Ovary (tissue), 10 donors: ENCODE measurements at regions of chr5 and their contacts with region 1.

Region 1: GRCh38 chr5:134041570-134042411 is 37.0 kb upstream of the VDAC1 start:
- DNase-seq: no peak
- H3K4me3 ChIP-seq: no peak overlapping the region
- H3K27ac ChIP-seq: no peak overlapping the region
- H3K4me1 ChIP-seq: no peaks in the 10 kb centered on the region
- H3K27me3 ChIP-seq: no peaks in the 10 kb centered on the region
- CTCF ChIP-seq: no peak
- EP300 ChIP-seq: no peak
- POLR2A ChIP-seq: no peak

Region 2: GRCh38 chr5:133111299-133111698 is 930.5 kb before region 1 on chr5:
- intact Hi-C with region 1: loop called in 1 of 4 experiments (anchors 5 kb)
- DNase-seq: peak; percentile 50 to 86 (median 73)
- H3K4me3 ChIP-seq: no peak overlapping the region
- H3K27ac ChIP-seq: no peak overlapping the region
- H3K4me1 ChIP-seq: no peaks in the 10 kb centered on the region
- H3K27me3 ChIP-seq: no peaks in the 10 kb centered on the region
- CTCF ChIP-seq: peak in 2 of 3 donors; percentile 17 to 44
- EP300 ChIP-seq: no peak
- POLR2A ChIP-seq: no peak

Region 3: DNA sequence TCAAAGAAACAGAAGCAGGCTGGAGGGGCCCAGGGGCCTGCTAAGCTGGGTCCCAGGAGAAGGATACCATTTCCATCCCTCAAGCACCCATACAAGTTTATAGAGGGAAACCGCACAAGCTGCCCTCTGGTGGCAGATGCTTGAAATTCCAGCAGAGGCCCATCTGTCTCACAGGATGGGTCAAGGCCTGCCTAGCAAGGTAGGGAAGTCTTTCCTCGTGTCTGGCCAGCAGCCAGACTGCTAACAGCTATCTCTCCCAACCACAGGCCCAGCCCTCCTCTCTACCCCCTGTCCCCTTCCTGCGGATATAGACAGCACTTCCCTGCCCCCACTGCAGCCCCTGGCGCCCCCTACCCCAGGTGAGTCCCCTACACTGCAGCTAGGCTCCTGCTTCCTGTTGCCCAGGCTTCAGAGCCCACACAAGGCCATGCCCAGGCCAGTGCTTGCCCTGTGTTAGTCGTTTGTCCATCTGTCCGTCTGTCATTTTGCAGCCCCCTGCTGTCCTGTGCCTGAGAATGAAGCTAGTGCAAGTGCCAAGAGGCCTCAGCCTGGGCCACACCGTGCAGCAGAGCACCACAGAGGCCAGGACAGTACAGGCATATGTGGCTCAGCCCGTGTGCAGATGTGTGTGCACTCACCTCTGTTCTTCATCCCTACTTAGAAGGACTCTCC is 98.9 kb after region 1 on chr5:
- intact Hi-C with region 1: loop called in 3 of 4 experiments (anchors 5 to 10 kb)
- DNase-seq: peak; percentile 47 to 73 (median 59)
- H3K4me3 ChIP-seq: no peak overlapping the region
- H3K27ac ChIP-seq: no peak overlapping the region
- H3K4me1 ChIP-seq: peaks cover 1% of the 10 kb centered on the region
- H3K27me3 ChIP-seq: no peaks in the 10 kb centered on the region
- CTCF ChIP-seq: no peak
- EP300 ChIP-seq: no peak
- POLR2A ChIP-seq: no peak

Region 4: DNA sequence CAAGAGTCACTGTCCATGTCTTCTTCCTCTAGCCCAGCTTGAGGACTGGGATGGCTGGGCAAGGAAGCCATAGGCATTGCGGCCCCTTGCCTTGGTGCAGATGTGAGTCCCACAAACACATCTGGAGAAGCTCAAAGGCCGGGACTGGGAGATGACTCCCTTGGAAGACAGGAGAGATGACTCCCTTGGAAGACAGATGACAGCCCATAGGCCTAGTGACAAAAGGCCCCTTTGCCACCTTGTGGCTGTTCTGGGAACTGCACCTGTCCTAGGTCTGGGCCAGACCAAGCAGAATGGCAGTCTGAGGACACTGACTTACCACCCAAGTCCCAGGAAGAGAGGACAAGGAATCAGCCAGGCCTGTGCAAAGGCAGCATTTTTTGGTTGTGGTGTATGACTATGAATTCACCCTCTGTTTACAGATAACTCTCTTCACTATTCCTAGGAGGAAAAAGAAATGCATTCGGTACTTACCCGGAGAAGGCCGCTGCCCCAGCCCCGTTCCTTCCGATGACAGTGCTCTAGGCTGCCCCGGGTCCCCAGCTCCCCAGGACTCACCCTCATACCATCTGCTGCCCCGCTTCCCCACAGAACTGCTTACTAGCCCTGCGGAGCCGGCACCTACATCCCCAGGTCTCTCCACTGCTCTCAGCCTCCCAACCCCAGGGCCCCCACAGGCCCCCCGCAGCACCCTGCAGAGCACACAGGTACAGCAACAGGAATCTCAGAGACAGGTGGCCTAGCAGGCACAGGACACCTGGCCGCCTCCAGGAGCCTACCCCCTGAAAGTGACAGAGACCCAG is 104.2 kb after region 1 on chr5:
- intact Hi-C with region 1: loop called in 3 of 4 experiments (anchors 5 to 10 kb)
- DNase-seq: peak; percentile 50 to 77 (median 68)
- H3K4me3 ChIP-seq: no peak overlapping the region
- H3K27ac ChIP-seq: no peak overlapping the region
- H3K4me1 ChIP-seq: no peaks in the 10 kb centered on the region
- H3K27me3 ChIP-seq: no peaks in the 10 kb centered on the region
- CTCF ChIP-seq: peak; percentile 60 to 69 (median 67)
- EP300 ChIP-seq: no peak
- POLR2A ChIP-seq: no peak

Region 5: DNA sequence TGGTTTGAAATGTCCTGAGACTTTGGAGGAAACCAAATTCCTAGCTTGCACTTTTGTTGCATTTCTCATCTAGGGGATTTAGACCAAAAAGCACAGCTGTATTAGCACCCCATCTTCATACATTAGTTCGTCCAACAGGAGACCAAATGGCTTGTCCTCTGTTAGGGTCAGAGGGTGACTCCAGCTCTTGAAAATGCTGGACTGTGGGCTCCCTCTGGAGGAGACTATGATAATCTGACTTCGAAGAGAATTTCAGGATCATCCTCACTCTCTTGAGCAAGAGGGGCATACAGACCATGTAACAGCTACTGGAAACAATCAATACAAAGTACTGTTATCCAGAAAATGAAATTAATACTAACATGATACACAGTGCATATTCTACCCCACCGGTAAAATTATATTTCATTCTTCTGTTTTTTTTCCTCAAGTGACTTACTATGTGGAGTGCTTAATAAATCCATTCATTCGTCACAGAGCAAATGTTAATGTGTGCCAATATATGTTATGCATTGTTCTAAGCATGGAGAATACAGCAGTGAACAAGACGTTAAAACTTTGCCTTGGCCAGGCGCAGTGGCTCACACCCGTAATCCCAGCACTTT is 247.8 kb after region 1 on chr5:
- intact Hi-C with region 1: loop called in 1 of 4 experiments (anchors 10 kb)
- DNase-seq: peak in 4 of 5 donors; percentile 26 to 56 (median 42)
- H3K4me3 ChIP-seq: no peak overlapping the region
- H3K27ac ChIP-seq: no peak overlapping the region
- H3K4me1 ChIP-seq: no peaks in the 10 kb centered on the region
- H3K27me3 ChIP-seq: no peaks in the 10 kb centered on the region
- CTCF ChIP-seq: peak; percentile 40 to 81 (median 76)
- EP300 ChIP-seq: no peak
- POLR2A ChIP-seq: no peak

Region 6: GRCh38 chr5:134515801-134516200 is 474.0 kb after region 1 on chr5:
- intact Hi-C with region 1: no loop called
- DNase-seq: no peak
- H3K4me3 ChIP-seq: no peak overlapping the region
- H3K27ac ChIP-seq: no peak overlapping the region
- H3K4me1 ChIP-seq: peaks cover 15% of the 10 kb centered on the region
- H3K27me3 ChIP-seq: no peaks in the 10 kb centered on the region
- CTCF ChIP-seq: no peak
- EP300 ChIP-seq: no peak
- POLR2A ChIP-seq: no peak